Prostate gland (tissue), 2 donors: ENCODE measurements at regions of chr11 and their contacts with region 1.

Region 1: DNA sequence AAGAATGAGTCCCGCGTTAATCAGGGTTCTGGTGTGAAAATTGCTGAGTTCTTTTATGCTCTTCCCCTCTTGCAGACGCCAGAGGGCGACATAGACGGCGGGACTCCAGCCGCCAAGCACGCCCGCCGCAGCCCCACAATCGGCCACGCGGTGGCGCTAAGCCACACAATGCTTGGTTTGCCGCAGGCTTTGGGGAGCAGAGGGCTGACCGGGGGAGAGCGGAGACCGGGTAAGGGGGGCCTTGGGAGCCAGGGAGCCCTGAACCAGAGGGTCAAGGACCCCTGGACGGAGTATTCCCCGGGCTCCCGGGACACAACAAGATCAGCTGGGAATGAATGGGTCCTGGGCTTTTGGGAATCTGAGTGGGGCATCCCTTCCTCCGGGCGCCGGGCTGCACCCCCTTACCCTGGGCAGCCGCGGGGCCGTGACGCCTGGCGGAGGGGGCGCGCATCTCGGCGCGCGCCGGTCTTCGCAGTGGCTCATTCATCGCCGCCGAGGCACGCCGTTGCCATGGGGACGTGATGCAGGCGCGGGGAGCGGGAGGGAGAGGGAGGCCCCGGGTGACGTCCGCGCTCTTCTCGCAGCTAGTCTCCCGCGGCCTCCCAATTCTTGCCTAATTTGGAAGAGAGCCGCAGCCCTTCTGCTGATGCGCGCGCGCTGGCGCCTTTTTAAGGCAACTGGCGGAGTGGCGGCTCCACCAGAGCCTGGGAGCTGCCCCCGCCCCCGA is 12.2 kb upstream of the NPAS4 start:
- DNase-seq: peak; percentile 79
- H3K4me3 ChIP-seq: peak overlapping the region in 1 of 2 donors; percentile 24
- H3K27ac ChIP-seq: peak overlapping the region; percentile 67 to 69
- H3K4me1 ChIP-seq: no peaks in the 10 kb centered on the region
- H3K27me3 ChIP-seq: peaks cover 4% of the 10 kb centered on the region
- CTCF ChIP-seq: peak; percentile 97 to 100 (median 98)
- POLR2A ChIP-seq: no peak

Region 2: DNA sequence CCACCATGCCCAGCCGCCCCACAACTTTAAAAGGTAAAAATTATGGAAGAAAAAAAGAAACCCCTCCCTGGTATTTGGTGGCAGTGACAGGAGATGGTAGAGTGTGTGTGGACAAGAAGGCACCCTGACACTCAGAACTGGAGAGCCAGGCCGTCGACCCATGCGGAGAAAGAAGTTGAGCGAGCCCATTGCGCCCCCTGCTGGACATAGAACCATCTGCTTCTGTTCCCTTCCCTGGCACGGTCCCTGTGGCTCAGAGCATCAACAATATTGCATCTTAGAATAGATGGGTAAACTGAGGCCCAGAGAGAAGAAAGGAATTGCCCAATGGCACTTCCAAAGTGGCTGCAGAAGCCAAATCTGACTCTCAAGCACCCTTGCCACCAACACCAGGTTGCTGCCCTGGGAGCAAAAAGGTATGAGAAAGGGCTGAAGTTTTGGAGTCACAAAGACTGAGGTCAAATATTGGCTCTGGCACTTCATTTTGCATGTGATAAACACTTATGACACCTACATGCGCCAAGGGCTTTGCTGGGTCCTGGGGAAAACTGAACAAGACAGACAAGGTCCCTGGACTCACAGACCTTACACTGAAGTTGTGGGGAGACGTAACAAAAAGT is 21.4 kb after region 1 on chr11:
- intact Hi-C with region 1: loop called (anchors 2 kb)
- DNase-seq: peak; percentile 52
- H3K4me3 ChIP-seq: no peak overlapping the region
- H3K27ac ChIP-seq: no peak overlapping the region
- H3K4me1 ChIP-seq: no peaks in the 10 kb centered on the region
- H3K27me3 ChIP-seq: no peaks in the 10 kb centered on the region
- CTCF ChIP-seq: peak; percentile 49 to 75 (median 67)
- POLR2A ChIP-seq: no peak

Region 3: GRCh38 chr11:66438504-66439466 is 30.1 kb after region 1 on chr11 and contains the start of gene MRPL11:
- intact Hi-C with region 1: loop called (anchors 2 kb)
- DNase-seq: peak; percentile 91
- H3K4me3 ChIP-seq: peak within 1 kb of the TSS; percentile 78 to 81
- H3K27ac ChIP-seq: peak within 1 kb of the TSS; percentile 81 to 83
- H3K4me1 ChIP-seq: no peaks in the 10 kb centered on the region
- H3K27me3 ChIP-seq: no peaks in the 10 kb centered on the region
- CTCF ChIP-seq: peak; percentile 28 to 81 (median 74)
- POLR2A ChIP-seq: no peak
- total RNA-seq, gene MRPL11: 44.2 to 51.2 TPM